Endothelial cell of umbilical vein (primary cell): ENCODE measurements at regions of chr11 and their contacts with region 1.

Region 1: DNA sequence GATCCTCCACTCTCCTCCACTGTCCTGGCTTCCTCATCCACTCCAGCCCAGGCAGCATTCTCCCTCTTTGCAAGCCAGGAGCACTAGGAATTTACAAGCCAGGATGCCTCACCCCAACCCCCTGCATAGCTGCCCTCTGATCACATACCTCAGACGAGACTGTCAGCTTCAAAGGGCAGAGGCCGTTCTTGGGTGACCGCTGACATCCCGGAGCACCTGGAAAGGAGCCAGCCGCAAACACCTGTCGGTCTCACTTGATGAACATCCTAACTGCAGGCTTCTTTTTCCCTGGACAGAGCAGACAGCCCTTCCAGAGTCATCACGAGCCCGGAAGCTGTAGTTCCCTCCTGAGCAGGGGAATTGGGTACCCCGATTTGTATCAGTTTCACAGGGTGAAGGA is 451.3 kb upstream of the B3GAT1 start:
- DNase-seq: no peak
- H3K4me3 ChIP-seq: no peak overlapping the region
- H3K27ac ChIP-seq: no peak overlapping the region
- H3K4me1 ChIP-seq: no peaks in the 10 kb centered on the region
- H3K27me3 ChIP-seq: no peaks in the 10 kb centered on the region
- CTCF ChIP-seq: no peak
- POLR2A ChIP-seq: no peak

Region 2: DNA sequence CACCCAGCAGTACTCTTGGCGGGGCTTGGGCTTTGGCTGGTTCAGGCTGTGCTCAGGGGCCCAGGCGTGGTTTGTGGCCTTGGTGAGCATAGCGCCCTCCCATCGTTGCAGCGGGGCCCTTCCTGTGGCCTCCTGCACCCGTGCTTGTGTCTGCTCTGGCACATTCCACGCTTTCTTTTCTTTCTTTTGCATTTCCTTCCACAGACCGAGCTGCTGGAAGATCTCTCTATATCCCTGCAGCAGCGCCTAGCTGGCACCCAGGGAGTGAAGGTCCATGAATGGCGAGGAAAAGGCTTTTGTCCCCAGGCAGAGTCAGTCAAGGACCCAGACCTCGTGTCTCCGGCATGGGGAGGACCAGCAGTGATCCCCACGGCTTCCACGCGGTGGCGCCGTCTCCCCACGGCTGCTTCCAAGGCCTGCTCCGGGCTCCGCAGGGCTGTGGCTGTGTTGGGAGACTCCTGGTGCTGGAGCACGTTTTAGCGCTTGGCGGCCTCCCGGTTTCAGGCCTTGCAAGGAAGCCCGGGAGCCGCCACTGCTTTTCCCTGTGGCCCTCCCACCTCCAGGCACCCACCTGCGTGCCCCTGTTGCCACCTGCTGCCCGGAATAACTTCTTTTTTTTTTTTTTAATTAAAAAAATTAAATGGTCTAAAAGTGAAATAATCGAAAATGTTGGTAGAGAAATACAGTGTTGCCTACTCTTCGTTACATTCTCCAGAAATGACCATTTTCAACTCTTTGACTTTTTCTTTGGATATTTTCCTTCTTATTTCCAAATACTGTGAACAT is 503.1 kb before region 1 on chr11:
- CTCF ChIA-PET with region 1: no interaction called
- POLR2A ChIA-PET with region 1: no interaction called
- dilution Hi-C with region 1: no loop called
- intact Hi-C with region 1: loop called (anchors 1 kb)
- DNase-seq: peak; percentile 66
- H3K4me3 ChIP-seq: no peak overlapping the region
- H3K27ac ChIP-seq: no peak overlapping the region
- H3K4me1 ChIP-seq: no peaks in the 10 kb centered on the region
- H3K27me3 ChIP-seq: no peaks in the 10 kb centered on the region
- CTCF ChIP-seq: peak; percentile 86 to 97
- POLR2A ChIP-seq: no peak

Region 3: GRCh38 chr11:134592391-134592990 is 270.8 kb before region 1 on chr11:
- CTCF ChIA-PET with region 1: no interaction called
- POLR2A ChIA-PET with region 1: no interaction called
- dilution Hi-C with region 1: no loop called
- intact Hi-C with region 1: loop called (anchors 2 kb)
- DNase-seq: peak; percentile 2
- H3K4me3 ChIP-seq: no peak overlapping the region
- H3K27ac ChIP-seq: no peak overlapping the region
- H3K4me1 ChIP-seq: no peaks in the 10 kb centered on the region
- H3K27me3 ChIP-seq: no peaks in the 10 kb centered on the region
- CTCF ChIP-seq: peak; percentile 31 to 46
- POLR2A ChIP-seq: no peak

Region 4: GRCh38 chr11:134742224-134742612 is 121.1 kb before region 1 on chr11:
- CTCF ChIA-PET with region 1: no interaction called
- POLR2A ChIA-PET with region 1: no interaction called
- dilution Hi-C with region 1: no loop called
- intact Hi-C with region 1: no loop called
- DNase-seq: peak; percentile 4
- H3K4me3 ChIP-seq: no peak overlapping the region
- H3K27ac ChIP-seq: peak overlapping the region; percentile 61
- H3K4me1 ChIP-seq: peaks cover 25% of the 10 kb centered on the region
- H3K27me3 ChIP-seq: peaks cover 0 to 3% of the 10 kb centered on the region in 2 experiments
- CTCF ChIP-seq: no peak
- POLR2A ChIP-seq: no peak

Region 5: DNA sequence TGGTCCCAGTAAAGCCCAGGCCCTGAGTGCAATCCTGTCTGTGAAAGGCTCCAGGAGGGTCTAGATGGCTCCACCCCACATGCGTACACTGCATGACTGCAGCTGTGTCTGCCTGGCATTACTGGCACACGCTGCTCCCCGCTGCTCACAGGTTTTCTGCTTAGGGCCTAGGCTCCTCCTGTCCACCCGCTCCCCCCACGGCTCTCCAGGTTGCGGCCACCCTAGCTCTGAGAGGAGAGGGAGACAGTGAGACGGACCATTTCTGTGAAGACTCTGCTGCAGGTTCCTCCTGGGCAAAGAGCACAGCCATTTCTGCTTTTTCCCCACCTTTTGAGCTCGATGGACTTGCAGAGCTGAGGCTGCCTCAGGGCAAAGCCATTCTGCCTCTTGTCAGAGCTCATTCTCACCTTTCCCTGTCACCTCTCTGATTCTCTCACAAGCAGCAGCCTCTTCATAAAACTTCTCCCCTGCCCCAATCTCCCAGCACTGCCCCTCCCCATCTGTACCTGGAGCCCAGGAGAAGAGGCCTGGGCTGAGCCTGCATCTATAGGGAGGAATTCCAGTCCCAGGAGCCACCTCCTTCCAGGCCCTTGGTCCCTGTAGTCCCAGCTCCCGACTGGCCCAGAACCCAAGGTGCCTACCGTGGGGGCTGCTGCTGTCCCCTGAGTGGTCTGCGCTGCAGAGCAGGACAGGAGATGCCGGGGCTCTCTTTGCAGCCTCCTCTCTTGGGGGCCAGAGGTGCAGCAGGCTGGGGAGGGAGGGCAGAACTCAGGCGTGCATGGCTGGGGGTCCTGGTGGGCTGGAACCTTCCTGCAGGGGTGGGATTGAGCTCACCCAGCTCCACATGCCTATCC is 17.6 kb before region 1 on chr11:
- CTCF ChIA-PET with region 1: no interaction called
- POLR2A ChIA-PET with region 1: no interaction called
- dilution Hi-C with region 1: no loop called
- intact Hi-C with region 1: no loop called
- DNase-seq: no peak
- H3K4me3 ChIP-seq: no peak overlapping the region
- H3K27ac ChIP-seq: no peak overlapping the region
- H3K4me1 ChIP-seq: no peaks in the 10 kb centered on the region
- H3K27me3 ChIP-seq: no peaks in the 10 kb centered on the region
- CTCF ChIP-seq: no peak
- POLR2A ChIP-seq: no peak

Region 6: DNA sequence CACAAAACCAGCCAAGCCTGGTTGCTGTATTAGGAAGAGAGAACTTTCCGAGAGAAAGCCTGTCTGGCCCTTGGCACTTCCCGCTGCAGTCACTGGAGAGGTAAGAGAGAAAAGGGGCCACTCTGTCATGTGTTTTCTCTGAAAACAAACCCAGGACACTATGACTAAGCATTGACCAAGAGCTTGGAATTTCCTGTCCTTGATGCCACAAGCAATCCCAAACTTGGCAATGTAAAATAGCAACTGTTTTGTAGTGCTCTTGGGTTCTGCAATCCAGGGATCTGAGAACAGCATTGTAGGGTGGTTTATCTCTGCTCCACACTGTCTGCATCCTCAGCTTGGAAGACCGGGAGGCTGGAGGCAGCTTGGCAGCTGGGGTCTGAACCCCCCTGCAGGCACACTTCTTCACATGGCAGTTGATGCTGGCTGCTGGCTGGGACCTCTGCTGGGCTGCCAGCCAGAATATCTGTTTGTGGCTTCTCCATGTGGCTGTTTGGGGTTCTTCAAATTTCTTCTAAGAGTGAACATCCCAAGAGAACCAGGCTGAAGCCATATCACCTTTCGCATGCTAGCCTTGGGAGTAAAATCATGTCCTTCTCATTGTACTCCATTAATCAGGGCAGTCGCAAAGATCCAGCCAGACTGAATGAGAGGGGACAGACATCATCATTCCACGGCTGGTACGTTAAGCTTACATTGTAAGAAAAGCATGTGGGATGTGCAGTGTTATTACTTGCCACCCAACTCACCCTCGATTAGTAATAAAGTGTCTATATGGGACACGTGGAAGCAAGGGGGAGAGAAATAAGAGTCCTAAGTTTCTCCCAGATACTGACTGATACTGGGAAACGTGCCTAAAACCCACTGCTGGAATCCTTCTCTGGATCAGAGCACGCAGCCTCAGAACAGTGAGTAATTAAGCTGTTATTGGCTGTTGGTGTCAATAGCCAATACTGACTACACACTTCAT is 86.1 kb after region 1 on chr11:
- CTCF ChIA-PET with region 1: no interaction called
- POLR2A ChIA-PET with region 1: no interaction called
- dilution Hi-C with region 1: no loop called
- intact Hi-C with region 1: loop called (anchors 2 kb)
- DNase-seq: peak; percentile 91
- H3K4me3 ChIP-seq: no peak overlapping the region
- H3K27ac ChIP-seq: peak overlapping the region; percentile 89
- H3K4me1 ChIP-seq: peaks cover 27% of the 10 kb centered on the region
- H3K27me3 ChIP-seq: no peaks in the 10 kb centered on the region
- CTCF ChIP-seq: no peak
- POLR2A ChIP-seq: no peak

Region 7: DNA sequence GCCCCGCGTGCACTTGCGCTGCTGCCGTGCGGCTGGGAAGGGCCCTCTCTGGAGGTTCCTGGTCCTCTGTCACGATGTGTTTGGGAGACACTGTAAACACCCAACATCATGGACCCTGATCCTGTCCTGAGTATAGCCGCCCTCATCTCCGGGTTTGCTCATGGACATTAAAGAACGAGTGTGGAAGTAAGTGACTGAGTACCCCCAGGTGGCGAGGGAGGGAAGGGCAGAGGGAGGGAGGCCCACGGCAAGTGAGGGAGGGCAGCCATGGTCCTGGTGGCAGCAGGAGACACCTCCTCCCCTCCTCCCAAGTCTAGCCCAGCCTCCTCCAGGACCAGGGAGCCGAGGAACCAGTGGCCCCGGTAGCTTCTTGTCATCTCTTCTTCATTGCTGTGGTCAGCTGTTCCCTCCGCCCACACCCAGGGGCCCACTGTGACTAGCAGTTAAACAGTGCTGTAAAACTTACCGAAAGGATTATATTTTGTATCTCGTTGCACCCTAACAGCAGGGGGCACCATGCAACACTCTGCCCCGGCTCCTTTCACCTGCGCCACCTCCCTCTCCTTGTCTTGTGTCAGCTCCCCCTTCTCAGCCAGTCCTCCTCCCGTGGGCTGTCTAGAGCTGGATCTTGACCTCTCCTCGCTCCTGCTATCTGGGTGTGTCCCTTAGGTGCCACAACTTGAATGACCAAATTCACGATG is 115.2 kb after region 1 on chr11:
- CTCF ChIA-PET with region 1: no interaction called
- POLR2A ChIA-PET with region 1: no interaction called
- dilution Hi-C with region 1: no loop called
- intact Hi-C with region 1: loop called (anchors 1 kb)
- DNase-seq: no peak
- H3K4me3 ChIP-seq: no peak overlapping the region
- H3K27ac ChIP-seq: no peak overlapping the region
- H3K4me1 ChIP-seq: no peaks in the 10 kb centered on the region
- H3K27me3 ChIP-seq: no peaks in the 10 kb centered on the region
- CTCF ChIP-seq: no peak
- POLR2A ChIP-seq: no peak